Heart right ventricle (tissue), 16 donors: ENCODE measurements at regions of chr3 and their contacts with region 1.

Region 1: GRCh38 chr3:186108941-186109865 is at the start of gene ETV5:
- DNase-seq: peak; percentile 98 to 99
- ATAC-seq: peak; percentile 95 to 99 (median 98)
- H3K4me3 ChIP-seq: peak within 1 kb of the TSS; percentile 67 to 95 (median 84)
- H3K27ac ChIP-seq: peak within 1 kb of the TSS; percentile 60 to 90 (median 84)
- H3K4me1 ChIP-seq: peaks cover 5 to 34% (median 23%) of the 10 kb centered on the region in 9 donors
- H3K27me3 ChIP-seq: peaks cover 0 to 69% (median 0%) of the 10 kb centered on the region in 7 donors
- CTCF ChIP-seq: no peak
- total RNA-seq, gene ETV5: 4.4 to 12.6 (median 5.8) TPM

Region 2: GRCh38 chr3:185846037-185846436 is 263.2 kb before region 1 on chr3:
- intact Hi-C with region 1: no loop called
- DNase-seq: no peak
- ATAC-seq: peak in 1 of 8 donors; percentile 52
- H3K4me3 ChIP-seq: no peak overlapping the region
- H3K27ac ChIP-seq: no peak overlapping the region
- H3K4me1 ChIP-seq: no peaks in the 10 kb centered on the region
- H3K27me3 ChIP-seq: peaks cover 0 to 3% (median 0%) of the 10 kb centered on the region in 7 donors
- CTCF ChIP-seq: peak in 1 of 9 donors; percentile 20

Region 3: DNA sequence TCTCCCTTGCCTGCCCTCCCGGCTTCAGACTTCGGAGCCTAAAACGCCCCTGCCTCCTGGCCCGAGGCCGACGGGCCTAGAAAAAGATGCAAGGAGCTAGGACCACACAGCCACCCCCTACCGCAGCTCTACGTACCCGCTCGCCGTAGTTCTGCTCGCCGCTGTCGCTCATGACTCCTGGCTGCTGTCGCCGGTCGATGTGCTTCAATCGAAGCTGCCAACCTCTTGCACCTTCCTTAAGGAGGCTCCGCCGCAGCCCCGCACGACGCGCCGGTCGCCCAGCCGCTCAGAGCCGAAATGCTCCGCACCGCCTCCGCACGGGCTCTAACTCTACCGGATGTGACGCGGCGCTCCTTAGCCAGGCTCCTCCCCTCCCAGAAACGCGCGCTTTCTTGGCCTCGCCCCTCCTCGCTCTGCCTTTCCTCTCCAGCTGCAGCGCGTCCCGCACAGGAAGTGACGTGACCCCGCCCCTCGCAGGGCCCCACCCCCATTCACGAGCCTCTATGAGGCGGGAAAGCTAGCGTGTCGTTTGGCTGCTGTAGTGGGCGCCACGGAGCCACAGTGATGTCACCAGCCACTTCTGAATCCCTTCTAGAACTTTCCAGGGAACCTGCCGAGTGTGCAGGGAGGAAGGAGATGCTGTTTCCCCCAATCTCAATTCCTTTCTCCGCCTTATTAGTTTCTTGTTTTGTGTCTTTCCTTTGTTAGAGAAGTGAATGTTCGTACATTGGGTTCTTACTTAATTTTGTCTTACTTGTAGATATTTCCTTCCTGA is 171.3 kb before region 1 on chr3 and contains the start of gene TRA2B:
- intact Hi-C with region 1: loop called in 1 of 10 experiments (anchors 2 kb)
- DNase-seq: peak; percentile 99
- ATAC-seq: peak; percentile 98 to 99 (median 99)
- H3K4me3 ChIP-seq: peak within 1 kb of the TSS; percentile 80 to 100 (median 94)
- H3K27ac ChIP-seq: peak within 1 kb of the TSS; percentile 98 to 100 (median 100)
- H3K4me1 ChIP-seq: peaks cover 0 to 39% (median 30%) of the 10 kb centered on the region in 9 donors
- H3K27me3 ChIP-seq: no peaks in the 10 kb centered on the region
- CTCF ChIP-seq: peak in 8 of 9 donors; percentile 12 to 66 (median 40)
- total RNA-seq, gene TRA2B: 46.3 to 75.9 (median 52.1) TPM

Region 4: GRCh38 chr3:186209810-186210752 is 100.9 kb after region 1 on chr3:
- intact Hi-C with region 1: loop called in 1 of 10 experiments (anchors 10 kb)
- DNase-seq: peak; percentile 58 to 74
- ATAC-seq: peak; percentile 75 to 90 (median 89)
- H3K4me3 ChIP-seq: no peak overlapping the region
- H3K27ac ChIP-seq: peak overlapping the region; percentile 18 to 86 (median 72)
- H3K4me1 ChIP-seq: peaks cover 9 to 58% (median 40%) of the 10 kb centered on the region in 9 donors
- H3K27me3 ChIP-seq: no peaks in the 10 kb centered on the region
- CTCF ChIP-seq: no peak

Region 5: GRCh38 chr3:186241910-186242821 is 133.0 kb after region 1 on chr3:
- intact Hi-C with region 1: loop called in 1 of 10 experiments (anchors 10 kb)
- DNase-seq: peak; percentile 65 to 71
- ATAC-seq: peak; percentile 94 to 98 (median 95)
- H3K4me3 ChIP-seq: peak overlapping the region in 7 of 10 donors; percentile 4 to 51 (median 43)
- H3K27ac ChIP-seq: peak overlapping the region; percentile 55 to 82 (median 72)
- H3K4me1 ChIP-seq: peaks cover 6 to 41% (median 27%) of the 10 kb centered on the region in 9 donors
- H3K27me3 ChIP-seq: no peaks in the 10 kb centered on the region
- CTCF ChIP-seq: peak in 8 of 9 donors; percentile 11 to 64 (median 59)

Region 6: GRCh38 chr3:186268616-186269448 is 159.6 kb after region 1 on chr3:
- intact Hi-C with region 1: no loop called
- DNase-seq: no peak
- ATAC-seq: peak in 1 of 8 donors; percentile 9
- H3K4me3 ChIP-seq: no peak overlapping the region
- H3K27ac ChIP-seq: no peak overlapping the region
- H3K4me1 ChIP-seq: peaks cover 0 to 6% (median 0%) of the 10 kb centered on the region in 9 donors
- H3K27me3 ChIP-seq: peaks cover 0 to 3% (median 0%) of the 10 kb centered on the region in 7 donors
- CTCF ChIP-seq: no peak

Region 7: DNA sequence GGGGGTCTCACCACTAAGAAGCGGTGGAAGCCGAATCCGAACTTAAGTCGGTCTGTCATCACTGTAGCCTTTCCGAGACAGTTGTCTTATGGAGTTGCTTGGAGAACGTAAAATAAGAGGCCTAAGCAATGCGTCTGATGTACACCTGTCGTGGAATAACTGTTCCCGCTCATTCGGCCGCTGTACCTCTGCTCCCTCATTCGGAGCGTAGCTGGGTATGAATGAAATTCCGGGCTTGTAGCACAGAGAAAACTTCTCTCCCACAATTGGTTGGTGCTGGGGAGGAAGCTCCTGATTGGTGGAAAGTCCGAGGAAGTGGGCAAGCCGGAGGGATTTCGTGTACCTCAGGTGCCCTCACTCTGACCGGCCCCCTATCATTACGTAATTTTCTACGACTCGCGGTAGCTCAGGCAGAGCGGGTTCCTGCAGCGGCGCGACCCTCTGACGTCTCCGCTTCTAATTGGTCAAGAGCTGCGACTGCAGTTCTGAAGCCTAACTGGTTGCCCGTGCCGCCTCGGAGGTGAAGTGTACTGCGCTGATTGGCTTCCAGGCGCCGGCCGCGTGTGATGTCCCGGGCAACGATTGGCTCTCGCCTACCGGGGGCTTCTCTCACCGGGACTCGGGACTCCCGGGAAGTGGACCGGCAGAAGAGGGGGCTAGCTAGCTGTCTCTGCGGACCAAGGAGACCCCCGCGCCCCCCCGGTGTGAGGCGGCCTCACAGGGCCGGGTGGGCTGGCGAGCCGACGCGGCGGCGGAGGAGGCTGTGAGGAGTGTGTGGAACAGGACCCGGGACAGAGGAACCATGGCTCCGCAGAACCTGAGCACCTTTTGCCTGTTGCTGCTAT is 461.1 kb after region 1 on chr3 and contains the start of gene DNAJB11:
- intact Hi-C with region 1: loop called in 1 of 10 experiments (anchors 2 kb)
- DNase-seq: peak; percentile 98 to 99
- ATAC-seq: peak; percentile 94 to 97 (median 96)
- H3K4me3 ChIP-seq: peak within 1 kb of the TSS; percentile 65 to 95 (median 86)
- H3K27ac ChIP-seq: peak within 1 kb of the TSS; percentile 43 to 95 (median 91)
- H3K4me1 ChIP-seq: peaks cover 0 to 48% (median 42%) of the 10 kb centered on the region in 9 donors
- H3K27me3 ChIP-seq: no peaks in the 10 kb centered on the region
- CTCF ChIP-seq: no peak
- total RNA-seq, gene DNAJB11: 17.9 to 39.9 (median 23.9) TPM